PC-9 (cell line): ENCODE measurements at regions of chr10 and their contacts with region 1.

Region 1: GRCh38 chr10:25828475-25828874 is 105.6 kb upstream of the MYO3A start:
- DNase-seq: no peak
- H3K4me3 ChIP-seq: no peak overlapping the region
- H3K27ac ChIP-seq: no peak overlapping the region
- H3K4me1 ChIP-seq: no peaks in the 10 kb centered on the region
- H3K27me3 ChIP-seq: peaks cover 9% of the 10 kb centered on the region; the same call in 1 of the 2 replicates
- CTCF ChIP-seq: no peak

Region 2: GRCh38 chr10:26574783-26575182 is 746.3 kb after region 1 on chr10:
- CTCF ChIA-PET with region 1: no interaction called
- POLR2A ChIA-PET with region 1: interaction called, 15 read pairs
- intact Hi-C with region 1: no loop called
- DNase-seq: no peak
- H3K4me3 ChIP-seq: no peak overlapping the region
- H3K27ac ChIP-seq: no peak overlapping the region
- H3K4me1 ChIP-seq: no peaks in the 10 kb centered on the region
- H3K27me3 ChIP-seq: no peaks in the 10 kb centered on the region; the same call in 1 of the 2 replicates
- CTCF ChIP-seq: no peak